Ovary (tissue), 10 donors: ENCODE measurements at regions of chr10 and their contacts with region 1.

Region 1: GRCh38 chr10:77846718-77847630 is 79.6 kb downstream of the DLG5 start:
- DNase-seq: peak; percentile 75 to 90 (median 86)
- H3K4me3 ChIP-seq: no peak overlapping the region
- H3K27ac ChIP-seq: peak overlapping the region; percentile 32 to 68
- H3K4me1 ChIP-seq: peaks cover 6% of the 10 kb centered on the region
- H3K27me3 ChIP-seq: no peaks in the 10 kb centered on the region
- CTCF ChIP-seq: peak; percentile 91 to 96 (median 94)
- EP300 ChIP-seq: no peak
- POLR2A ChIP-seq: no peak

Region 2: GRCh38 chr10:77801474-77802161 is 45.4 kb before region 1 on chr10:
- intact Hi-C with region 1: no loop called
- DNase-seq: no peak
- H3K4me3 ChIP-seq: no peak overlapping the region
- H3K27ac ChIP-seq: no peak overlapping the region
- H3K4me1 ChIP-seq: no peaks in the 10 kb centered on the region
- H3K27me3 ChIP-seq: no peaks in the 10 kb centered on the region
- CTCF ChIP-seq: no peak
- EP300 ChIP-seq: no peak
- POLR2A ChIP-seq: no peak

Region 3: DNA sequence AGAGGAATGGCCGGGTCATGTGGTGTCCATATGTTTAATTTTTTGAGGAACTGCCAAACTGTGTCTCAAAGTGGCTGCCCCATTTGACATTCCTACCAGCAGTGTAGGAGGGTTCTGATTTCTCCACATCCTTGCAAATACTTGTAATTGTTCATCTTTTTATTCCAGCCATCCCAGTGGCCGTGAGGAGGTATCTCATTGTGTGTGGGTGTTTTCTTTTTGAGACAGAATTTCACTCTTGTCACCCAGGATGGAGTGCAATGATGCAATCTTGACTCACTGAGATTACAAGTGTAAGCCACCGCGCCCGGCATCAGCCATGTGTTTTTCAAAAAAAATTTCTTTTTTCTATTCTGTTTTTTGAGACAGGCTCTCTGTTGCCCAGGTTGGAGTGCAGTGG is 118.3 kb after region 1 on chr10:
- intact Hi-C with region 1: loop called in 2 of 4 experiments (anchors 5 to 10 kb)
- DNase-seq: no peak
- H3K4me3 ChIP-seq: no peak overlapping the region
- H3K27ac ChIP-seq: no peak overlapping the region
- H3K4me1 ChIP-seq: no peaks in the 10 kb centered on the region
- H3K27me3 ChIP-seq: no peaks in the 10 kb centered on the region
- CTCF ChIP-seq: no peak
- EP300 ChIP-seq: no peak
- POLR2A ChIP-seq: no peak

Region 4: GRCh38 chr10:77970869-77971803 is 124.2 kb after region 1 on chr10:
- intact Hi-C with region 1: loop called in 3 of 4 experiments (anchors 5 to 10 kb)
- DNase-seq: peak; percentile 70 to 89 (median 80)
- H3K4me3 ChIP-seq: no peak overlapping the region
- H3K27ac ChIP-seq: peak overlapping the region in 1 of 2 donors; percentile 41
- H3K4me1 ChIP-seq: peaks cover 4% of the 10 kb centered on the region
- H3K27me3 ChIP-seq: no peaks in the 10 kb centered on the region
- CTCF ChIP-seq: no peak
- EP300 ChIP-seq: no peak
- POLR2A ChIP-seq: no peak

Region 5: GRCh38 chr10:78029269-78030226 is 182.6 kb after region 1 on chr10 and contains the start of gene POLR3A:
- intact Hi-C with region 1: loop called in 3 of 4 experiments (anchors 2 to 5 kb)
- DNase-seq: peak; percentile 95 to 98 (median 97)
- H3K4me3 ChIP-seq: peak within 1 kb of the TSS; percentile 98
- H3K27ac ChIP-seq: peak within 1 kb of the TSS; percentile 18 to 66
- H3K4me1 ChIP-seq: peaks cover 5% of the 10 kb centered on the region
- H3K27me3 ChIP-seq: no peaks in the 10 kb centered on the region
- CTCF ChIP-seq: peak; percentile 74 to 87 (median 75)
- EP300 ChIP-seq: peak; percentile 50
- POLR2A ChIP-seq: no peak
- total RNA-seq, gene POLR3A: 9.3 to 15.0 (median 13.1) TPM